ENCODE measurements at regions of chr17 and their contacts with region 1.

Region 1: DNA sequence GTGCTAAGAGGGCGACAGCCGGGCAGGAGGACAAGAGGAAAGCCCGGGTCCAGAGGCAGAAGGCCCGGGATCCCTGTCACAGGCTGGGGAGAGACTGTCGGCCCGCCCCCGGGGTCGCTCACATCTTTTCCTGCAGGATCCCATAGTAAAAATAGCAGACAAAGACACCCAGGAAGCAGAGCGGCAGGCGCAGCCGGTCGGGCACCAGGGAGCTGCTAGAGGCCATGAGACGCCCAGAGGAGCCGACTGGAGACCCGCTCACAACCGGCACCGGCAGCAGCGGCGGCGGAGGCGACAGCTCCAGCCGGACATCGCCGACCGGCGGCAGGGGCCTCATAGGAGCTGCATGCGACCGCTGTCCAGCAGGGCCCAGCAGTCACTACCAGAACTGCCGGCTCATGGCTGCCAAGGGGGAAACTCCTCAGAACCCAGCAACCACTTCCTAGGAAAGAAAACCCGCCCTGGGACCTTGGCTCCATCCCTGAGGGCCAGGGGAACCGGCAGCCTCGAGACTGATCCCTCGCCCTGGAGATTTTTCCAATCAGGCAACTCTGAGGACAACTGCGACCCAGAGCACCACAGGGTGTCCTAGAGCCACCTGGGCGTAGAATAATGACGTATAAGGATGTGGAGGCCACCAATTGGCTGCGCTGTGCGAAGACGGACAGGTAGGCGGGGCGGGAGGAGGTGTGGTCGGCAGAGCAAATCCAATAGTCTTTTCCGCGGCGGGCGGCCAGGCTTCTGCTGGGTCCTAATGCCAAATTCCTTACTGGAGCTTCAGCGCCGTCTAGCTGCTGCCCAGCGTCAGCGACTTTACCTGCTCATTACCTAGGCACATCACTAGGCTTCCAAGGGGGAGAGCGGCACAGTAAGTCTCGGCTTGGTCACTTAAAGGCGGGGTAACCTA is at the start of gene SLC35B1:
- DNase-seq: peak; percentile 97 to 99 (median 98)
- H3K4me3 ChIP-seq: peak within 1 kb of the TSS; percentile 70 to 86
- H3K4me3 Mint-ChIP-seq: peak within 1 kb of the TSS; percentile 93 to 97 (median 96)
- H3K27ac ChIP-seq: peak within 1 kb of the TSS; percentile 90
- H3K27ac Mint-ChIP-seq: peak within 1 kb of the TSS; percentile 95 to 99 (median 98)
- H3K4me1 ChIP-seq: peaks cover 33% of the 10 kb centered on the region
- H3K4me1 Mint-ChIP-seq: peaks cover 35 to 51% (median 45%) of the 10 kb centered on the region in 4 donors
- H3K27me3 ChIP-seq: no peaks in the 10 kb centered on the region
- H3K27me3 Mint-ChIP-seq: no peaks in the 10 kb centered on the region
- total RNA-seq, gene SLC35B1: 48.4 to 52.1 TPM

Region 2: GRCh38 chr17:48944519-48945260 is 763.2 kb before region 1 on chr17 and contains the start of gene SNF8:
- CTCF ChIA-PET with region 1: no interaction called
- POLR2A ChIA-PET with region 1: no interaction called
- intact Hi-C with region 1: loop called (anchors 5 kb)
- DNase-seq: peak; percentile 89 to 92 (median 91)
- H3K4me3 ChIP-seq: peak within 1 kb of the TSS; percentile 91 to 99
- H3K4me3 Mint-ChIP-seq: peak within 1 kb of the TSS; percentile 95 to 99 (median 96)
- H3K27ac ChIP-seq: peak within 1 kb of the TSS; percentile 89
- H3K27ac Mint-ChIP-seq: peak within 1 kb of the TSS; percentile 96 to 98 (median 97)
- H3K4me1 ChIP-seq: peaks cover 28% of the 10 kb centered on the region
- H3K4me1 Mint-ChIP-seq: peaks cover 5 to 31% (median 13%) of the 10 kb centered on the region in 4 donors
- H3K27me3 ChIP-seq: no peaks in the 10 kb centered on the region
- H3K27me3 Mint-ChIP-seq: peaks cover 0 to 2% of the 10 kb centered on the region in 2 donors
- total RNA-seq, gene SNF8: 55.6 to 59.4 TPM

Region 3: DNA sequence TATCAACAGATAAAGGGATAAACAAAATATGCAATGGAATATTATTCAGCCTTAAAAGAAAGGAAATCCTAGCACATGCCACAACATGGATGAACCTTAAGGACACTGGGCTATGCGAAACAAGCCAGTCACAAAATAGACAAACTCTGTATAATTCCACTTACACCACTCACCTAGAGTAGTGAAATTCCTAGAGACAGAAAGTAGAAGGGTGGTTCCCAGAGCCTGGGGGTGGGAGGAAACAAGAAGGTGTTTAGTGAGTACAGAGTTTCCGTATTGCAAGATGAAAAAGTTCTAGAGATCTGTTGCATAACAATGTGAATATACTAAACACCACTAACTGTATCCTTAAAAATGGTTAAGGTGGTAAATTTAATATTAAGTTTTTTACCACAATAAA is 40.0 kb before region 1 on chr17:
- CTCF ChIA-PET with region 1: no interaction called
- POLR2A ChIA-PET with region 1: no interaction called
- intact Hi-C with region 1: no loop called
- DNase-seq: no peak
- H3K4me3 ChIP-seq: no peak overlapping the region
- H3K4me3 Mint-ChIP-seq: peak overlapping the region in 1 of 8 donors; percentile 6
- H3K27ac ChIP-seq: no peak overlapping the region
- H3K27ac Mint-ChIP-seq: peak overlapping the region in 2 of 7 donors; percentile 7 to 57
- H3K4me1 ChIP-seq: peaks cover 56% of the 10 kb centered on the region
- H3K4me1 Mint-ChIP-seq: peaks cover 36 to 57% (median 48%) of the 10 kb centered on the region in 4 donors
- H3K27me3 ChIP-seq: no peaks in the 10 kb centered on the region
- H3K27me3 Mint-ChIP-seq: no peaks in the 10 kb centered on the region

Region 4: GRCh38 chr17:49687878-49688491 is 19.9 kb before region 1 on chr17:
- CTCF ChIA-PET with region 1: interaction called, 5 read pairs
- POLR2A ChIA-PET with region 1: interaction called, 12 read pairs
- intact Hi-C with region 1: no loop called
- DNase-seq: peak in 4 of 5 donors; percentile 29 to 54 (median 42)
- H3K4me3 ChIP-seq: no peak overlapping the region
- H3K4me3 Mint-ChIP-seq: peak overlapping the region; percentile 82 to 94 (median 90)
- H3K27ac ChIP-seq: peak overlapping the region; percentile 64
- H3K27ac Mint-ChIP-seq: peak overlapping the region; percentile 7 to 99 (median 96)
- H3K4me1 ChIP-seq: peaks cover 30% of the 10 kb centered on the region
- H3K4me1 Mint-ChIP-seq: peaks cover 26 to 55% (median 29%) of the 10 kb centered on the region in 4 donors
- H3K27me3 ChIP-seq: no peaks in the 10 kb centered on the region
- H3K27me3 Mint-ChIP-seq: no peaks in the 10 kb centered on the region

Region 5: GRCh38 chr17:49730078-49730784 is 22.4 kb after region 1 on chr17:
- CTCF ChIA-PET with region 1: interaction called, 10 read pairs
- POLR2A ChIA-PET with region 1: interaction called, 9 read pairs
- intact Hi-C with region 1: no loop called
- DNase-seq: no peak
- H3K4me3 ChIP-seq: no peak overlapping the region
- H3K4me3 Mint-ChIP-seq: no peak overlapping the region
- H3K27ac ChIP-seq: no peak overlapping the region
- H3K27ac Mint-ChIP-seq: peak overlapping the region; percentile 54 to 84 (median 59)
- H3K4me1 ChIP-seq: peaks cover 61% of the 10 kb centered on the region
- H3K4me1 Mint-ChIP-seq: peaks cover 41 to 68% (median 49%) of the 10 kb centered on the region in 4 donors
- H3K27me3 ChIP-seq: no peaks in the 10 kb centered on the region
- H3K27me3 Mint-ChIP-seq: no peaks in the 10 kb centered on the region

Region 6: GRCh38 chr17:49763735-49764558 is 56.1 kb after region 1 on chr17 and contains the start of gene FAM117A:
- CTCF ChIA-PET with region 1: interaction called, 42 read pairs
- POLR2A ChIA-PET with region 1: interaction called, 156 read pairs
- intact Hi-C with region 1: loop called (anchors 1 kb)
- DNase-seq: peak; percentile 97 to 100 (median 98)
- H3K4me3 ChIP-seq: peak within 1 kb of the TSS; percentile 38 to 70
- H3K4me3 Mint-ChIP-seq: peak within 1 kb of the TSS; percentile 92 to 98 (median 96)
- H3K27ac ChIP-seq: peak within 1 kb of the TSS; percentile 71
- H3K27ac Mint-ChIP-seq: peak within 1 kb of the TSS; percentile 89 to 98 (median 94)
- H3K4me1 ChIP-seq: peaks cover 46% of the 10 kb centered on the region
- H3K4me1 Mint-ChIP-seq: peaks cover 40 to 60% (median 45%) of the 10 kb centered on the region in 4 donors
- H3K27me3 ChIP-seq: no peaks in the 10 kb centered on the region
- H3K27me3 Mint-ChIP-seq: no peaks in the 10 kb centered on the region
- total RNA-seq, gene FAM117A: 95.1 to 102 TPM

Region 7: DNA sequence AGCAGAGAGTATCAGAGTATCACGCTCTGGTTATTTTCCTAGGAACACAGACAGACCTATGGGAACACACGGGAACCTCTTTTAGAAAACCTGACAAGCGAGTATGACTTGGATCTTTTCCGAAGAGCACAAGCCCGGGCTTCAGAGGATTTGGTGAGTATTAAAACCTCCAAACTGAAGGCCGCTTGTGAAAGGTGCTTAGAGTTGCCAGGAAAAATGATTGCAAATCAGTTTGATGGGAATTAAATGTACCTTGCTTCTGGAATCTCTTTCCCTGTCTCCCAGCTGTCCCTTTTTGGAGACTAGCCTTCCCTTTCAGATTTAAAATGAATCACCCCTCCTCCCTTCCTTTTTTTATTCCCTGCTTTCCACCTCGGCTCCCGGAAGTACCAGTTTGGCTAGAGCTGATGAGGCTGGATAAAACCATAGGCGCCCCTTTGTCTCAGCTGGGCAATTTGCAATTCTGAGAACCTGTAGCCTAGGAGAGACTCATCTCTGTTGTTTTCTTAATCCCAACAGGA is 108.0 kb after region 1 on chr17:
- CTCF ChIA-PET with region 1: interaction called, 14 read pairs
- POLR2A ChIA-PET with region 1: interaction called, 25 read pairs
- intact Hi-C with region 1: loop called (anchors 1 kb)
- DNase-seq: no peak
- H3K4me3 ChIP-seq: no peak overlapping the region
- H3K4me3 Mint-ChIP-seq: peak overlapping the region in 1 of 8 donors; percentile 13
- H3K27ac ChIP-seq: no peak overlapping the region
- H3K27ac Mint-ChIP-seq: peak overlapping the region; percentile 48 to 99 (median 70)
- H3K4me1 ChIP-seq: peaks cover 63% of the 10 kb centered on the region
- H3K4me1 Mint-ChIP-seq: peaks cover 41 to 76% (median 61%) of the 10 kb centered on the region in 4 donors
- H3K27me3 ChIP-seq: no peaks in the 10 kb centered on the region
- H3K27me3 Mint-ChIP-seq: no peaks in the 10 kb centered on the region

Measured in CD4-positive, alpha-beta memory T cell (primary cell).